ENCODE measurements at regions of chr5 and their contacts with region 1.

Region 1: GRCh38 chr5:170782438-170782837 is 1.1 kb upstream of the GABRP start:
- DNase-seq: no peak

Region 2: GRCh38 chr5:170769246-170769645 is 13.2 kb before region 1 on chr5:
- intact Hi-C with region 1: no loop called
- DNase-seq: no peak

Region 3: GRCh38 chr5:172059661-172060100 is 1277.2 kb after region 1 on chr5:
- intact Hi-C with region 1: loop called in 1 of 2 experiments (anchors 10 kb)
- DNase-seq: no peak

Region 4: GRCh38 chr5:172322028-172322965 is 1539.9 kb after region 1 on chr5:
- intact Hi-C with region 1: no loop called
- DNase-seq: peak; percentile 32